Mammary epithelial cell (primary cell): ENCODE measurements at regions of chr5 and their contacts with region 1.

Region 1: DNA sequence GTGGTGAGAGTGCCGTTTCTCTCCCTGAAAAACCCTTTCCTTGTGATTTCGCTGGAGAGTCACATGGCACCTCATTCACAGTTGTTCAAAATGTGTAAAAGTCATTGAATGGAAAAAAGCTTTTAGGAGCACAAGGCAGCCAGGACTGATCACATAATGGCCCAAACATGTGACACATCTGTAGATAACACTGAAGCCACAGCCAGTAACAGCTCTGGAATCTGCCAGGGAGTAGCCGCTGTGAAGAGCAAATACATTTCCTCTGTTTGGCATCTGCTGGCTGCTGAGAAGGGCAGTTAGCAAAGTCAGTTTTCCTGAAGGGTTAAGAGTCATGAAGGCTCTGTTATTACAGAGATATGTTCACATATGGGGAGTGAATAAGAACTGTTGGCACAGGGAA is 271.8 kb downstream of the NNT start:
- DNase-seq: no peak
- H3K4me3 ChIP-seq: no peak overlapping the region
- H3K27ac ChIP-seq: no peak overlapping the region
- H3K4me1 ChIP-seq: no peaks in the 10 kb centered on the region
- H3K27me3 ChIP-seq: no peaks in the 10 kb centered on the region
- CTCF ChIP-seq: no peak

Region 2: GRCh38 chr5:43917925-43918324 is 43.2 kb after region 1 on chr5:
- CTCF ChIA-PET with region 1: no interaction called
- dilution Hi-C with region 1: no loop called
- in situ Hi-C with region 1: no loop called
- intact Hi-C with region 1: no loop called
- DNase-seq: no peak
- H3K4me3 ChIP-seq: no peak overlapping the region
- H3K27ac ChIP-seq: no peak overlapping the region
- H3K4me1 ChIP-seq: no peaks in the 10 kb centered on the region
- H3K27me3 ChIP-seq: no peaks in the 10 kb centered on the region
- CTCF ChIP-seq: no peak

Region 3: DNA sequence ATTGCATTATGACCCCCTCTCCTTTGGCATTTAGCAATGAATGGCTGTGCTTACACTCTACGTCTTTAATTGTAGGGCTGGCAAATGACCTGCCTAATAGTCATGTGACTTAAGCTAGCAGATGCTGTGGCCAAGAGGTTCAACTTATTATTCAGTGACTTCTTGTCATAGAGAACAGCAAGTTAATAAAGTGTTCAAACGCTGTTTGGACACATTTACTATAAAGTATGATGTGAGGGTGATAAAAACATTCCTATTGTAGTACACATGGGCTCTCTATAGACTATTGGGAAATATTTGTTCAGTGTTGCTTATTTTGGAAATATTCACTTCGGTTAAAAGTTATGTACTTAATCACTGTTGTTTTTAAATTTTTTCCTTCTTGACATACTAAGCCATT is 73.1 kb after region 1 on chr5:
- CTCF ChIA-PET with region 1: no interaction called
- dilution Hi-C with region 1: loop called (anchors 5 kb)
- in situ Hi-C with region 1: no loop called
- intact Hi-C with region 1: no loop called
- DNase-seq: no peak
- H3K4me3 ChIP-seq: no peak overlapping the region
- H3K27ac ChIP-seq: no peak overlapping the region
- H3K4me1 ChIP-seq: no peaks in the 10 kb centered on the region
- H3K27me3 ChIP-seq: no peaks in the 10 kb centered on the region
- CTCF ChIP-seq: no peak